ENCODE measurements at regions of chr13 and their contacts with region 1.

Region 1: GRCh38 chr13:41263261-41264027 is at the start of gene MTRF1:
- DNase-seq: peak; percentile 60 to 93 (median 81)
- ATAC-seq: peak; percentile 91 to 93
- H3K4me3 Mint-ChIP-seq: peak within 1 kb of the TSS; percentile 94 to 99 (median 97)
- H3K27ac Mint-ChIP-seq: peak within 1 kb of the TSS; percentile 95 to 99 (median 98)
- H3K4me1 Mint-ChIP-seq: peaks cover 7 to 52% (median 34%) of the 10 kb centered on the region in 4 donors
- H3K27me3 Mint-ChIP-seq: no peaks in the 10 kb centered on the region
- polyA plus RNA-seq, gene MTRF1: 13.8 to 24.3 (median 19.7) TPM

Region 2: DNA sequence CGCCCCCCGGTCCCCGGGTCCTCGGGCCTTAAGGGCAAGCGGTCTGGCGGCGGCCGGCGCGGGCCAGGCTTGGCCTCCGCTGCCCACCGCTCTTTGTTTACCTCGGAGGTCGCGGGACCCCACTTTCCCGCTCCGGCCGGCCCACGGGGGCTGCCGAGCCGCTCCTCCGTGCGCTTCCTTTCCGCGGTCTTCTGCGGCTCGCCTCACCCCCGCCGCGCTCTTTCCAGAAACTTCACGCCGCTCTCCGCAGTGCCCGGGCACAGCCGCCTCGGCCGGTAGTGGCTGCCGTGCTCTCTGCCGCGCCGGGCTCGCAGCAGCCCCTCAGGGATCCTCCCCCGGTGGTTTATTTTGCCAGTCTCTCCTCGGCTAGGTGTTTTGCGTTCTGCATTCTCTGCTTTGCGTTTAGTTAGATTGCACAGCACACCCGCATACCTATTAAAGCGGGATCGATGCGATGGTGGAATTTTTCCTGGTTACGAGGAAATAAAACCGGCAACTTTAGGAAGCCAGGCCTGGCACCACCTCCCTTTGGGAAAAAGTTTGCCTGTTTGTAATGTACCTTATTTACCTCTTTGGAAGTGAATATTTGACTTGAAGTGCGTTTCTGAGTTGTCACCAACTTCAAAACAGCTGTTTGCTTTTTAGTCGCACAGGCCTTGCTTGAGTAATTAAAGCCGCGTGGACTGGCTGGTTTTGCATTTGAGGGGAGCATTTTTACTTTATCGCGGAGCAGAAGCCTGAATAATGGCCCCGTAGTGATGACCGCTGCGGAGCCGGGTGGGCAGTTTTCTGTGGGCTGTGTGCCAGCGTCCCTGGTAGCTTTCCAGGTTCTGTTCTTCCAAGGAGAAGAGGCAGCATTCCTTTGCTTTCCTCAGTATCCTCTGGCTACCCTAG is 48.4 kb after region 1 on chr13:
- POLR2A ChIA-PET with region 1: interaction called, 10 read pairs
- DNase-seq: peak; percentile 32 to 72 (median 54)
- ATAC-seq: peak; percentile 54 to 61
- H3K4me3 Mint-ChIP-seq: peak overlapping the region; percentile 67 to 99 (median 94)
- H3K27ac Mint-ChIP-seq: peak overlapping the region; percentile 78 to 97 (median 93)
- H3K4me1 Mint-ChIP-seq: peaks cover 10 to 58% (median 49%) of the 10 kb centered on the region in 4 donors
- H3K27me3 Mint-ChIP-seq: peaks cover 0 to 1% (median 0%) of the 10 kb centered on the region in 5 donors

Region 3: DNA sequence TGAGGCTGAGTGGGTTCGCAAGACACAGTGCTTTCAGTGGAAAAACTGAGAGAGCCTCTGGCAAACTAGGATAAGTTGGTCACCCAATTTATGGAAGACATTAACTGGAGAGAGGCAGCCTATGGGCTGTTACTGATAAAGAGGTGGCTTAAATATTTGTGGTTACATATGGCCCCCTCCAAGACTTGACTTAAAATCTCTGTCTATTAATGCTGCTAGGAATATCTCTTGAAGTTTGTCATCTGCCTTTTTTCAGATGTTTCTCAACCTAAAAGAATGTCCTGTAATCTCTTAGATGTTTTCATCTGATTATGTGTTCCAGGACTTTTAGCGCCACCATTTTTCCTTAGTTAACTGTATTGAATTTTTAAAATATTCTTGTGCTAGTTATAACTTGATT is 102.2 kb after region 1 on chr13:
- POLR2A ChIA-PET with region 1: no interaction called
- DNase-seq: no peak
- ATAC-seq: no peak
- H3K4me3 Mint-ChIP-seq: no peak overlapping the region
- H3K27ac Mint-ChIP-seq: peak overlapping the region in 6 of 10 donors; percentile 9 to 79 (median 48)
- H3K4me1 Mint-ChIP-seq: peaks cover 16 to 52% (median 38%) of the 10 kb centered on the region in 4 donors
- H3K27me3 Mint-ChIP-seq: no peaks in the 10 kb centered on the region

Measured in naive thymus-derived CD8-positive, alpha-beta T cell (primary cell).